Thyroid gland (tissue), 4 donors: ENCODE measurements at regions of chrX and their contacts with region 1.

Region 1: DNA sequence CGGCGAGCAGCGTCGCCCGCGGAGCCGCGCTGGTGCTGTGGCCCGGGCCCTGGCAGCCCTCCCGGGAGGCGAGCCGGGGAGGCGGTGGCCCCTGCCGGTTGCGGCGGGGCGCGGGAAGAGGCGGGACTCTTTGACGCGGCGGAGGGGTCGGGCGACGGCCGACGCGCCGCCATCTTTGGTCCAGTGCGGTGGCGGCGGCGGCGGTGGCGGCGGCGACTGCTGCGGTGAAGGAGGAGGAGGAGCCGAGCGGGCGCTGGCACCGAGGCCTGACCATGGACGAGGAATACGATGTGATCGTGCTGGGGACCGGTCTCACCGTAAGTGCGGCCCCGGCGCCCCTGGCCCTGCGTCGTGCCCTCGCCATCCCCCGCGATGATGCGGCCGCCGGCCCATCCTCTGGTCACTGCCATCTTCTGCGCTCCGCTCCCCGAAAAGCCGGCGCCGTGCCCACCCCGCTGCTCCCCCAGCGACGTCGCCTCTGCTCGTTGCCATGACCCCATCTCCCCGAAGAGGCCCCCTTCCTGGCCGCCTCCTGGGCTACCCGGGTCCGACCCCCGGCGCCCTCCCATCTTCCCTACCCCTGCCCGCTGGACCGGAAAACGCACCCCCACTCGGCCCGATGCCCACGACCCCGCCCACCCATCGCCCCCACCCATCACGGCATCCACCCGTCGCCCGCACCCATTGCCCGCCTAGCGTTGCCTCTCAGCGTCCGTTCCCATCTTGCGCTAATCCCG is at the start of gene GDI1:
- DNase-seq: peak; percentile 57 to 59
- H3K4me3 ChIP-seq: peak within 1 kb of the TSS in 1 of 3 donors; percentile 56
- H3K27ac ChIP-seq: peak within 1 kb of the TSS; percentile 43 to 78 (median 66)
- H3K4me1 ChIP-seq: peaks cover 4 to 6% of the 10 kb centered on the region in 2 donors
- H3K27me3 ChIP-seq: no peaks in the 10 kb centered on the region
- CTCF ChIP-seq: no peak
- POLR2A ChIP-seq: peak in 1 of 2 donors; percentile 59
- total RNA-seq, gene GDI1: 59.7 to 86.2 (median 78.1) TPM

Region 2: GRCh38 chrX:154019633-154020528 is 417.3 kb before region 1 on chrX and contains the start of gene IRAK1:
- intact Hi-C with region 1: no loop called
- DNase-seq: peak; percentile 48 to 49
- H3K4me3 ChIP-seq: peak within 1 kb of the TSS in 1 of 3 donors; percentile 35
- H3K27ac ChIP-seq: peak within 1 kb of the TSS; percentile 65 to 77 (median 68)
- H3K4me1 ChIP-seq: peaks cover 9 to 29% of the 10 kb centered on the region in 2 donors
- H3K27me3 ChIP-seq: no peaks in the 10 kb centered on the region
- CTCF ChIP-seq: no peak
- POLR2A ChIP-seq: peak in 1 of 2 donors; percentile 48
- total RNA-seq, gene IRAK1: 36.4 to 53.1 (median 42.8) TPM

Region 3: GRCh38 chrX:154486396-154487207 is 49.5 kb after region 1 on chrX and contains the start of gene UBL4A:
- intact Hi-C with region 1: loop called (anchors 5 kb)
- DNase-seq: peak; percentile 81 to 92
- H3K4me3 ChIP-seq: peak within 1 kb of the TSS in 2 of 3 donors; percentile 17 to 51
- H3K27ac ChIP-seq: peak within 1 kb of the TSS; percentile 51 to 79 (median 68)
- H3K4me1 ChIP-seq: peaks cover 0 to 13% of the 10 kb centered on the region in 2 donors
- H3K27me3 ChIP-seq: no peaks in the 10 kb centered on the region
- CTCF ChIP-seq: no peak
- POLR2A ChIP-seq: peak in 1 of 2 donors; percentile 67
- total RNA-seq, gene UBL4A: 32.9 to 63.4 (median 41.3) TPM